AG04450 (cell line): ENCODE measurements at regions of chr12 and their contacts with region 1.

Region 1: DNA sequence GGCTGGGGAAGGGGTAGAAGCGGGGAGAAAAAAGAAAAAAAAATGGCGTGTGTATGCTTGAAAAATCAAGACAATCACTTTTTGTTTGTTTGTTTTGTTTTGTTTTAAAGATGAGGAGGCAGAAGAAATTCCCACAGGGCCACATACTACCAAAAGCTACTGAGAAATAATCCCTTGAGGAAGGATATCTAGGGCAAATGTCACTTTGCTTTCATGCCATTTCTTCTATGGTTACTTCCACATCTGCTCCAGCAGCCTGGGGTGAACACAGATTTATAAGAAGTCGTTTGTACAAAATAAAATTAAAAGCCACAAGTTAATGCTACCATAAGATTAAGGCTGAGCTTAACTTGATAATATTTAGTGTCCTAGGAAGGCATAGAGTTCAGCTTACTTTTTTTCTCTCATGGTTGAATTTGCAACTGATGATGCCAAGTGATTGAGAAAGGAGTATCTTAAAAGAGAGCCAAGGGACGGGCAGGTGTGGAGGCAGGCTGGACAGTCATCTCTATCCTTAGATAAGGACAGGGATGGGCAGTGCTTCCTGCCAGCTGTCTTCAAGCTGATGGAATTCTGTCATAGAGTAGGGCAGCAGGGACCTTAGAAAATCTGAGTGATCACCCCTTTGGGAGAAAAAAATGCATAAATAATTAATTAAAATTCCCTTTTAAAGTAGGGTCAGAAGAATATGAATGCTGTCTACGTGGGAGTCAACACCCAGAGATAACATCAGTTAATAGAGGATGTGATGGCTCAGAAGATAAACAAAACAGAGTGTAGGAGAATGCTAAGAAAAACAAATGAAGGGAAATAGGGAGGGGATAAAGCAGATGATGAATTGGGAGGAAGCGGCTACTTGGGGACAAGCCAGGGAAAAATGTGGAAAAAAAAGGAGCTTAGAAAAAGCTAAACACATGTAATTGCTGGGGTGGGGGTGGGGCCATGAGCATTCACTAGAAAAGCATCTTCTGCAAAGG is 57.1 kb downstream of the DYRK2 start:
- DNase-seq: no peak
- H3K4me3 ChIP-seq: no peak overlapping the region
- H3K27ac ChIP-seq: no peak overlapping the region
- H3K27me3 ChIP-seq: no peaks in the 10 kb centered on the region
- CTCF ChIP-seq: no peak

Region 2: DNA sequence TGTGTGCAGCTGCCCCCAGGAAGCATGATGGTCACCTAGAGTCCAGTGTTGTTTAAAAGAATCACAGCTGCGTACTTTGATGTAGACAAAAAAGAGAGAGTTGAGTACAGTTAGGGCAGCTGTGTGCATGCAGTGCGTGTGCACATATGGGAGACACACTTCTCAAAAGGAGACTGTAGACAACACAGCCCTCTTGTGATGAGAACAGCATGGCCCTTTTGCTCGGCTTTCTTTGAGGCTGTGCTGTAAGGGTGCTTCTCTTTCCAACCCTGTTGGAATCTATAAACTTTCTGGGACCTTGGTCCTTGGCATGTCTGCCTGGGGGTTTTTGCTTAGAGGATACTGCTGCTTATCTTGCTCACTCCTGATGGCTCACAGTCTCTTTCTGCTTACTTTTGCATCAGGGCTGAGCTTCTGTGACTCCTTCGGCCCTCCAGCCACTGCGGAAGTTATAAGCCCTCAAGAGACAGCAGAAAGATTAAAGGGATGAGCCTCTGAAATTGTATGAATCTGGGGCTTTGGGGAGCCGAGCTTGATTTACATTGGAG is 45.8 kb after region 1 on chr12:
- CTCF ChIA-PET with region 1: no interaction called
- POLR2A ChIA-PET with region 1: interaction called, 10 read pairs
- DNase-seq: no peak
- H3K4me3 ChIP-seq: no peak overlapping the region
- H3K27ac ChIP-seq: no peak overlapping the region
- H3K27me3 ChIP-seq: no peaks in the 10 kb centered on the region
- CTCF ChIP-seq: no peak